Activated naive CD4-positive, alpha-beta T cell treated with anti-CD3 and anti-CD28 coated beads for 36 hours (primary cell): ENCODE measurements at regions of chr19 and their contacts with region 1.

Region 1: DNA sequence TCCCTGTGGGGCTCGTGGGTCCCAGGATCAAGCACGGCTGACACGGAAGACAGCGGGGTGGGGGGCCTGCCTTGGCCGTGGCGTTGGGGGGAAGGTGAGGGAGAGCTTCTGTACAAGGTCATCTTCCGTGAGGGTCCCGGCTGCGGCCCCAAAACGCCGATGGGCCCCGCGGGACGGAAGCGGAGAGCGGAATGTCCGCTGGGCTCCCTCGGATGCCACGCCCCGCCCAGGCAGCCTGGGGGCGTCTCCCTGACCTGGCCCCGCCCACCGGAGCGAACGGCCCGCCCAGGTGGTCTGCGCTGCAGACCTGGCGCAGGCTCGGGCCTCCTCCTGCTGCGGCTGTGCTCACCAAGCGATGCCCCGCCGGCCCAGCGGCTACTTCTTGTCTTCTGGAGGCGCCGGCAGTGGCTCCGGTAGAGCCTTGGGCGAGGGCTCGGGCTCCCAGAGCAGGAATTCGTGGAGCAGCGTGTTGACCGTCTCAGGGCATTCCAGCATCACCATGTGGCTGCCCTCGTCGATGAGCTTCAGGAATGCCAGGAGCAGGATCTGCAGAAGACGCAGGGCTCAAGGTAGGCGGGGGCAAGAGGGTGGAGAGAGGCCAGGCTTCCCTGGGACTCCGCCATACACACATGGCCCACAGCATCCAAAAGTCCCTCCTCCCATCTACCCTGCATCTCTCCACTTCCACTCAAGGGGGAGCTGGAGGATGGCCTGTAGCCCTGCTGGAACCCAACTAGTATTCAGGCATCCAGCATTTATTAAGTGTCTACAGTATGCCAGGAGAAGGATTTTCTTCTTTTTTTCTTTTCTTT is 10.7 kb downstream of the ABHD8 start:
- DNase-seq: peak; percentile 88
- H3K4me3 Mint-ChIP-seq: peak overlapping the region; percentile 87
- H3K27ac Mint-ChIP-seq: peak overlapping the region; percentile 56
- H3K4me1 Mint-ChIP-seq: peaks cover 8% of the 10 kb centered on the region
- H3K27me3 Mint-ChIP-seq: no peaks in the 10 kb centered on the region

Region 2: GRCh38 chr19:17075035-17075863 is 217.2 kb before region 1 on chr19 and contains the starts of genes HAUS8 and MYO9B:
- CTCF ChIA-PET with region 1: no interaction called
- intact Hi-C with region 1: no loop called
- DNase-seq: peak; percentile 100
- H3K4me3 Mint-ChIP-seq: peak within 1 kb of the TSS; percentile 100
- H3K27ac Mint-ChIP-seq: peak within 1 kb of the TSS; percentile 98
- H3K4me1 Mint-ChIP-seq: peaks cover 55% of the 10 kb centered on the region
- H3K27me3 Mint-ChIP-seq: no peaks in the 10 kb centered on the region
- total RNA-seq, gene HAUS8: 47.3 to 48.8 TPM
- total RNA-seq, gene MYO9B: 73.1 to 78.6 TPM

Region 3: GRCh38 chr19:17195106-17195505 is 97.4 kb before region 1 on chr19:
- CTCF ChIA-PET with region 1: no interaction called
- intact Hi-C with region 1: no loop called
- DNase-seq: no peak
- H3K4me3 Mint-ChIP-seq: no peak overlapping the region
- H3K27ac Mint-ChIP-seq: no peak overlapping the region
- H3K4me1 Mint-ChIP-seq: no peaks in the 10 kb centered on the region
- H3K27me3 Mint-ChIP-seq: no peaks in the 10 kb centered on the region

Region 4: DNA sequence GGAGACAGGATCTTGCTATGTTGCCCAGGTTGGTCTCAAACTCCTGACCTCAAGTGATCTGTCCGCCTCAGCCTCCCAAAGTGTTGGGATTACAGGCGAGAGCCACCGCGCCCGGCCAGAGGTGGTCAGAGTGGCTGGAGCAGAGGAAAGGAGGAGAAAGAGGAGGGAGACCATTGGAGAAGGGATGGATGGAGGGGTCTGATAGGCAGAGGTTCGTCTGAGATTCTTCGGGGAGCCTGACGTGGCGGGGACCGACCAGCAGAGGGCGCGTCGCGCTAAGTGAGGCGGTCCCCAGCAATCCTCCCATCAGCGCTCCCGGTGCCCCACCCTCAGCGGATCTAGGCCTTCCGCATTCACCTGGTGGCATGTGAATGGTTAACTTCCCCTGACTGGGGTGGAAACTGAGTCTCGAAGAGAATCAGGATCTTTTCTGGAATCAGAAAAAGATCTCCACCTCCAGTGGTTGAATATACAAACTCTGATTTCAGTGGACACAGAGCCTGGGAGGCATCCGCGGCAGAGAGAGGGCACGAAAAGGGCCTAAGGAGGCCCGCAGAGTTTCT is 53.7 kb after region 1 on chr19:
- CTCF ChIA-PET with region 1: interaction called, 3 read pairs
- intact Hi-C with region 1: loop called (anchors 1 kb)
- DNase-seq: peak; percentile 88
- H3K4me3 Mint-ChIP-seq: no peak overlapping the region
- H3K27ac Mint-ChIP-seq: no peak overlapping the region
- H3K4me1 Mint-ChIP-seq: peaks cover 3% of the 10 kb centered on the region
- H3K27me3 Mint-ChIP-seq: peaks cover 8% of the 10 kb centered on the region